Aorta (tissue), 5 donors: ENCODE measurements at regions of chr12 and their contacts with region 1.

Region 1: DNA sequence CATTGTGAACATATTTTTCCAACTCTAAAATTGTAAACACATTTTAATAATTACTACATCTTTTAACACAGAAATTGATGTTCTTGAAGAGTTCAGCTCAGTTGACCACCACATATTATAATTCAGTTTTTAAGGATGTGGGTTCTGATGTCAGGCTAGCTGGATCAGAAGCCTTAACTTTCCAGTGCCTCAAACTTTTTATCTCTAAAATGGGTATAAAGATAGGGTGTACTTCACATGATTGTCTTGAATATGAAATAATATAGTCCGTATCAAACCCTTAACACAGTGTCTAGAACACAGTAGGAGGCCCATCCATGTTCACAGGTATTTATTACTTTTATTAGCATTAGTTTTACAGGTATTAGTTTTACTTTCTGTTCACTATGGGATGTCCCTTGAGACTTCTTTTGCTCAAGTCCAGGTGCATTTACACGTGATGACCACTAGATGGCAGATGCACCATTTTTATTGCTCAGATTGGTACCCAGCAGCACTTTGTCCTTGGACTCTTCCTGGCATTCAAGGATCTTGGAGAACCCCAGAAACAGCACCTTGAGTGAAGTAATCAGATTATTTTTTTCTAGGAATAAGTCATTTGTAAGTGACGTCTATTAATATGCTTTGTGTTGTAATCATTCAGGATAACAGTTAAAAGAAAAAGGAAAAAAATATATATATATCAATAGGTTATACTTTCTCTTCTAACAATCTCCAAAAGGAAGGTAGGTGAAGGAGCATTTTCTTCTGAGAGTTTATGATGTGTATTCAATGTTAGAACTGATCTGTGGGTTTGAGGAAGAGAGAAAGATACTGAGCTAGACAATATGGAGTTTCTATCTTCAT is 580.2 kb downstream of the ETNK1 start:
- DNase-seq: no peak
- ATAC-seq: peak; percentile 81
- H3K4me3 ChIP-seq: no peak overlapping the region
- H3K27ac ChIP-seq: no peak overlapping the region
- H3K4me1 ChIP-seq: no peaks in the 10 kb centered on the region
- H3K27me3 ChIP-seq: no peaks in the 10 kb centered on the region

Region 2: DNA sequence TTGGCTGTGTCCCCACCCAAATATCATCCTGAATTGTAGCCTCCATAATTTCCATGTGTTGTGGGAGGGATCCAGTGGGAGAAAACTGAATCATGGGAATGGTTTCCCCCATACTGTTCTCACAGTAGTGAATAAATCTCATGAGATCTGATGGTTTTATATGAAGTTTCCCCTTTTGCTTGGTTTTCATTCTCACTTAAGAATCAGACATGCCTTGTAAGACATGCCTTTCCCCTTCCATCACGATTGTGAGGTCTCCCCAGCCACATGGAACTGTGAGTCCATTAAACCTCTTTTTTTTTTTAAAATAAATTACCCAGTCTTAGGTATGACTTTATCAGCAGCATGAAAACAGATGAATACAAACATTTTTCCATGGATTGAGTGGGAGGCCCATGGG is 72.7 kb after region 1 on chr12:
- intact Hi-C with region 1: no loop called
- DNase-seq: no peak
- ATAC-seq: no peak
- H3K4me3 ChIP-seq: no peak overlapping the region
- H3K27ac ChIP-seq: no peak overlapping the region
- H3K4me1 ChIP-seq: no peaks in the 10 kb centered on the region
- H3K27me3 ChIP-seq: no peaks in the 10 kb centered on the region

Region 3: DNA sequence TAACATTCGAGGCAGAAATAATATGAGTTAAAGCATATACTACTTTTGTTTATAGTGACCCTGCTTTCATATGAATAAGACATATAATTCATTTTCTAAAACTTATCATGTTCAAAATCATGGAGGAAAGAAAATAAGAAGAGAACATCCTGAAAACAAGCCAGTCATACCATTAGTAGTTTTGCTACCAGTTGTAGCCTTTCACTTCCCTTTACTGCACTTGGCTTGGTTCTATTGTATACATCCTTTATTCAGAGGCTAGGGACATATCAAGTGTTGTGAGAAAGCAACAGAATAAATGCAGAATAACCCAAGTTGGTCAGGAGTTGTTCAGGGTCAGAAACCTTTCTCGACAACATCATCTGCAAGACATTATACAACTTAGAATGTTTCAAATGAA is 145.7 kb after region 1 on chr12:
- intact Hi-C with region 1: loop called (anchors 5 kb)
- DNase-seq: no peak
- ATAC-seq: no peak
- H3K4me3 ChIP-seq: no peak overlapping the region
- H3K27ac ChIP-seq: no peak overlapping the region
- H3K4me1 ChIP-seq: peaks cover 1 to 7% of the 10 kb centered on the region in 2 donors
- H3K27me3 ChIP-seq: no peaks in the 10 kb centered on the region

Region 4: DNA sequence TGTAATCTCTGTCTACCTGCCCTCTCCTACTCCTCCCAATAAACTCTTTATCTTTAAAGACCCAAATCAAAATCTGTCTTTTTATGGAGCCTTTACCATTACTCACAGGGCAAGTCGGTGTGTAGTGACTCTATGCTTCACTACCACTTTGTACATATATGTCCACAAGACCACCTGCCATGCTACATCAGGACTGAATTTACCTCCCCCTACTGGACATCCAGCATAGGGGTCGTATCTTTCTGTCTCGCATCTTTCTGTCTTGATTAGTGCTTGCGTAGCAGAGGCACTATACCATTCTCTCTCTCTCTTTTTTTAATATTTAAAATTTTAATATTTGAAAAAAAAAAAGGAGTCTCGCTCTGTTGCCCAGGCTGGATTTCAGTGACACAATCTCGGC is 156.8 kb after region 1 on chr12:
- intact Hi-C with region 1: loop called in 1 of 2 experiments (anchors 5 kb)
- DNase-seq: no peak
- ATAC-seq: no peak
- H3K4me3 ChIP-seq: no peak overlapping the region
- H3K27ac ChIP-seq: peak overlapping the region; percentile 36 to 52
- H3K4me1 ChIP-seq: peaks cover 0 to 3% of the 10 kb centered on the region in 2 donors
- H3K27me3 ChIP-seq: no peaks in the 10 kb centered on the region

Region 5: DNA sequence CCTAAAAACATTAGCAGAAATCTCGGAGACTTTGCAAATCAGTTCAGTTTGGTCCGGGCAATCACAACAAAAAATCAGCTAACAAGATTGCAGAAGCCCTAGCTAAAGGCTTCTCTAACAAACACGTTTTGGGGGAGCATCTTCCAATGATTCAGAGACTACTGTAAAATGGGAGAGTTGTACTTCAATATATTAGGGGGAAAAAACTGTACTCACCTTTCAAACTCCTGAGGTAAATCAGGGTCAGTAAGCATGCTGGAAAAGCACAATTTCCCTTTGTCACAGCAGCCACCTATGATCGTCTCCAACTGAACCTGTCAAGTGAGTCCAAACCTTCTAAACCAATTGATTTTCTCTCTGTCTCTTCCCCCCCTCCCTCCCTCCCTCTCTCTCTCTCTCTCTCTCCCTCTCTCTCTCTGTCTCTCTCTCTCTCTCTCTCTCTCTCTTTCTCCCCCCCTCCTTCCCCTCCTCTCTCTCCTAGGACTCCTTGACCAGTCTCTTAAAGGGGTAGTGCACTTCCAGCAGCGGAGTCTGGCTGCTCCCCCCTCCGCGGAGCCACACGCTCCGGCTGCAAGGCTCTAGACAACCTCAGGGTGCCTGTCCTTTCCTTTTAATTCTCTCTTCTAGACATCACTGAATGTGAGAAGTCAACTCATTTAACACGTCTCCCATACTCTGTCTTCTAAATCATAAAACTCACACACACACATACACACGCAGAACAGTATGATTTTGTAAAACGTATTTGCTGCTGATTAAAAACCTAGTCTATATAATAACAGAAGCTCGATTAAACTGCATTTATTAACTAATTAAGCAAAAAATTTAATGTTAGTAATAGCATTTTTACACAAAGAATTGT is 744.4 kb after region 1 on chr12 and contains the start of gene SOX5:
- intact Hi-C with region 1: loop called in 1 of 2 experiments (anchors 10 kb)
- DNase-seq: peak; percentile 62 to 79
- ATAC-seq: peak; percentile 90
- H3K4me3 ChIP-seq: peak within 1 kb of the TSS; percentile 87 to 99
- H3K27ac ChIP-seq: no peak within 1 kb of the TSS
- H3K4me1 ChIP-seq: no peaks in the 10 kb centered on the region
- H3K27me3 ChIP-seq: no peaks in the 10 kb centered on the region
- total RNA-seq, gene SOX5: 54.2 to 58.3 TPM

Region 6: DNA sequence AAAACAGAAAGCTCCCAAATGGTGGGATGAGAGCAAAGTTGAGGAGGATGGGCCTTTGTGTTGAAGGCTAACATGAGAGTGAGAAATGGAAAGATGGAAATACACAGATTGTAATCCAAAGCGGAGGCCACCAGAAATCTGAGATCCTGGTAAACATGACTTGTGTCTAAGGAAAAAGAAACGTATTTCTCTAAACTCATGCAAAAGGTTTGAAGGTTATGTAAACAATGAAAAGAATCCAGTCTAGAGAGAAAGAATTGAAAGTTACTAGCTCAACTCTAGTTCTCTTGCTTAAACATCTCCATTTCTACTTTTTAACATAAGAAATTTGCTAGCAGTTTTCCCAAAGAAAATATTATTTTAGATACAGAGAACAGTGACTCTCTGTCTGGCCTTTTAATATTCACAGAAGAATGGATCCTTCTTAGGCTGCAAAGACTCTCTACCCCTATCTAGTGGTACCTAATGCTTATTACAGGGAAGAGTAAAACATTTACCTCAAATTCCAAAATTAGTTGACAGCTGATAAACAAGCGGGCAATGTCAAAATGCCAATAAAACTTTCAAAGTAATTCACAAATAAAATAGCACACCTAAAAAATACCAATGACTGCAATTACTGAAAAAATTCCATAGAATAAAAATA is 820.1 kb after region 1 on chr12:
- intact Hi-C with region 1: loop called in 1 of 2 experiments (anchors 10 kb)
- DNase-seq: no peak
- ATAC-seq: no peak
- H3K4me3 ChIP-seq: no peak overlapping the region
- H3K27ac ChIP-seq: peak overlapping the region in 1 of 2 donors; percentile 28
- H3K4me1 ChIP-seq: no peaks in the 10 kb centered on the region
- H3K27me3 ChIP-seq: no peaks in the 10 kb centered on the region